ENCODE measurements at regions of chrX and their contacts with region 1.

Region 1: GRCh38 chrX:1554469-1555210 is 17.7 kb upstream of the P2RY8 start:
- DNase-seq: peak in 8 of 9 donors; percentile 28 to 92 (median 83)
- ATAC-seq: peak; percentile 97
- H3K4me3 ChIP-seq: peak overlapping the region; percentile 22
- H3K4me3 Mint-ChIP-seq: peak overlapping the region; percentile 55 to 81 (median 72)
- H3K27ac ChIP-seq: peak overlapping the region; percentile 72
- H3K27ac Mint-ChIP-seq: peak overlapping the region; percentile 91 to 100 (median 98)
- H3K4me1 ChIP-seq: peaks cover 47 to 55% of the 10 kb centered on the region in 2 donors
- H3K4me1 Mint-ChIP-seq: peaks cover 35 to 85% (median 56%) of the 10 kb centered on the region in 7 donors
- H3K27me3 ChIP-seq: no peaks in the 10 kb centered on the region
- H3K27me3 Mint-ChIP-seq: peaks cover 0 to 11% (median 0%) of the 10 kb centered on the region in 5 donors

Region 2: DNA sequence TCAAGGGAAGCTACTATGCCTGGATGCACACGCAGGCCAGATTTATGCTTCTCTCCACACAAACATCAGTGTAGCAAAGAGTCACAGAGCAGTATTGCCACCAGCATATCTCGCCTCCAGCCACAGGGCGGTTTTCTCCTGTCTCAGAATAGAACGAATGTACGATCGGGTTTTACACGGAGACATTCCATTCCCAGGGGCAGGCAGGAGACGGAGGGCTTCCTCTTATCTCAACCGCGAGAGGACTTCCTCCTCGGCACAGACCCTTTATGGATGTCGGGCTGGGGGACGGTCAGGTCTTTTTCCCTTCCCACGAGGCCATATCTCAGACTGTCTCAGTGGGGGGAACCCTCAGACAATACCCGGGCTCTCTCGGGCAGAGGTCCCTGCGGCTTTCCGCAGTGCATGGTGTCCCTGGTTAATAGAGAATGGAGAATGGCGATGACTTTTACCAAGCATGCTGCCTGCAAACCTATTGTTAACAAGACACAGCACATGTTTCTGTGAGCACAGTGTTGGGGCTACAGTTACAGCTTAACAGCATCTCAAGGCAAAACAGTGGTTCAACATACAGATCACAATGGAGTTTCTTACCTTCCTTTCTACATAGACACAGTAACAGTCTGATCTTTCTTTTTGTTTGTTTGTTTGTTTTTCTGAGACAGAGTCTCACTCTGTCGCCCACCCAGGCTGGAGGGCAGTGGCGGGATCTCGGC is 261.9 kb before region 1 on chrX:
- CTCF ChIA-PET with region 1: no interaction called
- POLR2A ChIA-PET with region 1: no interaction called
- intact Hi-C with region 1: no loop called
- DNase-seq: no peak
- ATAC-seq: peak; percentile 24
- H3K4me3 ChIP-seq: no peak overlapping the region
- H3K4me3 Mint-ChIP-seq: peak overlapping the region in 8 of 10 donors; percentile 14 to 71 (median 27)
- H3K27ac ChIP-seq: no peak overlapping the region
- H3K27ac Mint-ChIP-seq: peak overlapping the region in 2 of 9 donors; percentile 5 to 38
- H3K4me1 ChIP-seq: no peaks in the 10 kb centered on the region
- H3K4me1 Mint-ChIP-seq: peaks cover 4 to 15% (median 11%) of the 10 kb centered on the region in 7 donors
- H3K27me3 ChIP-seq: no peaks in the 10 kb centered on the region
- H3K27me3 Mint-ChIP-seq: peaks cover 0 to 22% (median 18%) of the 10 kb centered on the region in 5 donors

Region 3: GRCh38 chrX:1491851-1492349 is 62.7 kb before region 1 on chrX:
- CTCF ChIA-PET with region 1: no interaction called
- POLR2A ChIA-PET with region 1: no interaction called
- intact Hi-C with region 1: loop called in 1 of 2 experiments (anchors 2 kb)
- DNase-seq: peak in 8 of 9 donors; percentile 46 to 73 (median 54)
- ATAC-seq: peak; percentile 82
- H3K4me3 ChIP-seq: no peak overlapping the region
- H3K4me3 Mint-ChIP-seq: peak overlapping the region in 1 of 10 donors; percentile 30
- H3K27ac ChIP-seq: no peak overlapping the region
- H3K27ac Mint-ChIP-seq: peak overlapping the region in 8 of 9 donors; percentile 72 to 90 (median 84)
- H3K4me1 ChIP-seq: no peaks in the 10 kb centered on the region
- H3K4me1 Mint-ChIP-seq: peaks cover 20 to 56% (median 34%) of the 10 kb centered on the region in 7 donors
- H3K27me3 ChIP-seq: no peaks in the 10 kb centered on the region
- H3K27me3 Mint-ChIP-seq: peaks cover 0 to 2% (median 0%) of the 10 kb centered on the region in 5 donors

Region 4: DNA sequence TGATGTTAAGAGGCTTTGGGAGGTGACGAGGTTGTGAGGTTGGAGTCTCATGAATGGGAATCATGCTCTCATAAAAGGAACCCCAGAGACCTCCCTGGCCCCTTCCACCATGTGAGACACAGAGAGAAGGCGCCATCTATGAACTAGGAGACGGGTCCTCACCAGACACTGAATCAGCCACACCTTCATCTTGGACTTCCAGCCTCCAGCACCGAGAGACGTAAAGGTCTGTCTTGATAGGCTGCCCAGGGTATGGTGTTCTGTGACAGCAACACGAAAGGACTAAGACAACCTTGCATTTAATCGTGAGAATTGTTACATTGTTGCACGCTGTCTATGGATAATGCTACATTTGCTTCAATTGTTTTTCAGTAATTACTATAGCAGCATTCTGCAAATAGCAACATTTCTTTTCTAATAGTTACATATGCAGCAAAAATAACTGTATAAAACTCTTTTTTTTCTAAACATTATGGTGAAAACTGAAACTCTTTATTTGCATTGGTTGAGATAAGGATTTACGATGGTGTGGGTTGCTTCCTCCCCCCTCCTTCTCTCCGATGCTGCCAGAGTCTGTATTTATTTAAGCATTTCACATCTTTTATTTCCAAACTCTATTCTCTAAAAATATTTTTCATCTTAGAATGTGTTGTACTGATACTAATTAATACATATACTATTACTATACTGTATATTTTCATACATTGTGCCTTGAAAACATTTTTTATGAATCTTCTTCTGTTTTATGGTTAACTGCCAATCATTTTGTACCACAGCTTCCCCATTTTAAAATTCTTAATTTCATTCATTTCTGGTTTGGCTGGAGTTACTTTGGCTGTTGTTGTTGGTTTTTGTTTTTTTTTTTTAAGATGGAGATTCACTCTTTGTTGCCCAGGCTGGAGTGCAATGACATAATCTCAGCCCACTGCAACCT is 10.4 kb after region 1 on chrX:
- CTCF ChIA-PET with region 1: no interaction called
- POLR2A ChIA-PET with region 1: no interaction called
- intact Hi-C with region 1: loop called in 1 of 2 experiments (anchors 1 kb)
- DNase-seq: no peak
- ATAC-seq: no peak
- H3K4me3 ChIP-seq: no peak overlapping the region
- H3K4me3 Mint-ChIP-seq: peak overlapping the region in 4 of 10 donors; percentile 18 to 51 (median 33)
- H3K27ac ChIP-seq: no peak overlapping the region
- H3K27ac Mint-ChIP-seq: peak overlapping the region in 5 of 9 donors; percentile 24 to 86 (median 52)
- H3K4me1 ChIP-seq: peaks cover 27 to 42% of the 10 kb centered on the region in 2 donors
- H3K4me1 Mint-ChIP-seq: peaks cover 33 to 73% (median 66%) of the 10 kb centered on the region in 7 donors
- H3K27me3 ChIP-seq: no peaks in the 10 kb centered on the region
- H3K27me3 Mint-ChIP-seq: peaks cover 0 to 12% (median 0%) of the 10 kb centered on the region in 5 donors

Region 5: GRCh38 chrX:1580735-1581531 is 26.3 kb after region 1 on chrX:
- CTCF ChIA-PET with region 1: no interaction called
- POLR2A ChIA-PET with region 1: no interaction called
- intact Hi-C with region 1: loop called in 1 of 2 experiments (anchors 1 kb)
- DNase-seq: peak; percentile 42 to 75 (median 67)
- ATAC-seq: peak; percentile 89
- H3K4me3 ChIP-seq: no peak overlapping the region
- H3K4me3 Mint-ChIP-seq: peak overlapping the region in 5 of 10 donors; percentile 16 to 60 (median 50)
- H3K27ac ChIP-seq: no peak overlapping the region
- H3K27ac Mint-ChIP-seq: peak overlapping the region in 7 of 9 donors; percentile 11 to 83 (median 57)
- H3K4me1 ChIP-seq: peaks cover 33 to 36% of the 10 kb centered on the region in 2 donors
- H3K4me1 Mint-ChIP-seq: peaks cover 17 to 36% (median 28%) of the 10 kb centered on the region in 7 donors
- H3K27me3 ChIP-seq: no peaks in the 10 kb centered on the region
- H3K27me3 Mint-ChIP-seq: no peaks in the 10 kb centered on the region

Region 6: DNA sequence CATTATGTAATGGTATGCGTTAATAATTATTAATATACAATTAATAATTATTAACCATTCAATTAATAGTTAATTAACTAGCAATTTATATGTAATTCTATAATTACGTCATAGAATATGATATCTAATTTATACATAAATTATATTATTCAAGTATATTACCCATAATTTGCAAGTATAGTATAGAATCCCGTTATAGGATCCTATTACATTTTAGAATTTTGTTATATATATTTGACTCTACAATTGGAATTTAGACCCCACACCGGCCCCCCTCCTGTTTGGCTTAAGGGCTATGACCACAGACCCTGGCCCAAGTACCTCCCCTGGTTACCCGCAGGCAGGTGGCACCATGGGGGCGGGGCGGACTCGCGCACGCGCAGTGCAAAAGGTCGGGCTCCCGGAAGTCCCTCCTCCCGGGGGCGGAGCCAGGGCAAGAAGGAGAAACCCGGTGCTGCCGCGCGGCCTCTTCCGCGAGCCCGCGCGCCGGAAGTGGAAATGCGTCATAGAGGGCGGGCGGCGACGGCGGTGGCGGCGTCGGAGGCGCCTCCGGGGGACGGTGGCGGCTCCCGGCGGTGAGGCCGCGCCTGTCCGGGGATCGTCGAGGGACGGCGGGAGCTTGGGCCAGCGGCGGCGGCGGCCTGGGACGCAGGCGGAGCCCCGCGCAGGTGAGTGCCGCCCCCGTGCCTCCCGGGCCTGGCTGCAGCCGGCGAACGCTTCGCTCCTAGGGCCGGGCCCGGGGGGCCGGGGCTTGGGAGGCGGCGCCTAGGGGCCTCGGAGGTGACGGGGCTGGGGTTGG is 36.7 kb after region 1 on chrX and contains the start of gene AKAP17A:
- CTCF ChIA-PET with region 1: no interaction called
- POLR2A ChIA-PET with region 1: no interaction called
- intact Hi-C with region 1: loop called in 1 of 2 experiments (anchors 1 kb)
- DNase-seq: peak; percentile 92 to 100 (median 99)
- ATAC-seq: peak; percentile 95
- H3K4me3 ChIP-seq: peak within 1 kb of the TSS; percentile 76
- H3K4me3 Mint-ChIP-seq: peak within 1 kb of the TSS; percentile 85 to 97 (median 91)
- H3K27ac ChIP-seq: peak within 1 kb of the TSS; percentile 91
- H3K27ac Mint-ChIP-seq: peak within 1 kb of the TSS; percentile 82 to 94 (median 91)
- H3K4me1 ChIP-seq: peaks cover 7 to 10% of the 10 kb centered on the region in 2 donors
- H3K4me1 Mint-ChIP-seq: peaks cover 5 to 50% (median 34%) of the 10 kb centered on the region in 7 donors
- H3K27me3 ChIP-seq: no peaks in the 10 kb centered on the region
- H3K27me3 Mint-ChIP-seq: no peaks in the 10 kb centered on the region
- total RNA-seq, gene AKAP17A: 75.7 to 165 (median 125) TPM

Region 7: GRCh38 chrX:1778817-1779216 is 224.2 kb after region 1 on chrX:
- CTCF ChIA-PET with region 1: no interaction called
- POLR2A ChIA-PET with region 1: no interaction called
- intact Hi-C with region 1: no loop called
- DNase-seq: no peak
- ATAC-seq: no peak
- H3K4me3 ChIP-seq: no peak overlapping the region
- H3K4me3 Mint-ChIP-seq: no peak overlapping the region
- H3K27ac ChIP-seq: no peak overlapping the region
- H3K27ac Mint-ChIP-seq: no peak overlapping the region
- H3K4me1 ChIP-seq: no peaks in the 10 kb centered on the region
- H3K4me1 Mint-ChIP-seq: no peaks in the 10 kb centered on the region
- H3K27me3 ChIP-seq: no peaks in the 10 kb centered on the region
- H3K27me3 Mint-ChIP-seq: peaks cover 0 to 5% (median 0%) of the 10 kb centered on the region in 5 donors